ENCODE measurements at regions of chr22 and their contacts with region 1.

Region 1: DNA sequence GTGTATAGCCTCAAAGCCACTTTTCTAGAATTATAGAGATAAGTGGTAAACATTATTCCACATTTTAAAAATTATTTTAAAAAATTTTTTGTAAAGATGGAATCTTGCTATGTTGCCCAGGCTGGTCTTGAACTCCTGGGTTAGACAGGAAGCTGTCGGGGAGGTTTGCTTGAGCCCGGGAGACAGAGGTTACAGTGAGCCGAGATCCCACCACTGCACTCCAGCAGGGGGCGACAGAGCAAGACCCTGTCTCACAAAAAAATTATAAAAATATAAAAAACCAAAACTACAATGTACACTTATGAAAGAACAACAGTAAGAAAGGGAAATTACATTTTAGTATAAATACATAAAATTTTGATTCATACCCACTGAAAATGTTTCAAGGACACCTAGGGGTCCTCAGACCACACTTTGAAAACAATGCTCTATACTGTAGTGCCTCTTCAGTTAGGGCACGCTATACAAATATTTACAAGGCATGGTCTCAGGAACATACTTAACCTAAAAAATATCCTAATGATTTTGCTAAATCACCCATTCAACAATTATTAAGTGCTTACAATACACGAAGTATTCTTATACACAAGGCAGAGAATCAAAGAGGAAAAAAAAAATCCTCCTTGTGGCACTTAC is 111.2 kb downstream of the MRTFA start:
- DNase-seq: no peak
- ATAC-seq: peak; percentile 91
- H3K4me3 ChIP-seq: no peak overlapping the region
- H3K27ac ChIP-seq: no peak overlapping the region
- H3K4me1 ChIP-seq: peaks cover 2 to 20% of the 10 kb centered on the region in 2 experiments; a peak in 2 of 4 replicates
- H3K27me3 ChIP-seq: no peaks in the 10 kb centered on the region
- CTCF ChIP-seq: peak; percentile 74 to 90 (median 77); a peak in 5 of 6 replicates
- POLR2A ChIP-seq: no peak
- RAD21 ChIP-seq: peak; percentile 76

Region 2: GRCh38 chr22:40645579-40646197 is 120.3 kb after region 1 on chr22:
- CTCF ChIA-PET with region 1: interaction called, 20 read pairs
- POLR2A ChIA-PET with region 1: no interaction called
- RAD21 ChIA-PET with region 1: interaction called, 3 read pairs
- intact Hi-C with region 1: loop called (anchors 1 kb)
- DNase-seq: no peak
- ATAC-seq: no peak
- H3K4me3 ChIP-seq: no peak overlapping the region; a peak in 1 of 4 replicates
- H3K27ac ChIP-seq: no peak overlapping the region
- H3K4me1 ChIP-seq: peaks cover 8 to 23% of the 10 kb centered on the region in 2 experiments; a peak in 3 of 4 replicates
- H3K27me3 ChIP-seq: no peaks in the 10 kb centered on the region
- CTCF ChIP-seq: no peak
- POLR2A ChIP-seq: no peak
- RAD21 ChIP-seq: no peak

Measured in HCT116 (cell line).